Mammary epithelial cell (primary cell): ENCODE measurements at regions of chr10 and their contacts with region 1.

Region 1: GRCh38 chr10:90007226-90007625 is 305.8 kb downstream of the KIF20B start:
- DNase-seq: peak; percentile 98
- H3K4me3 ChIP-seq: no peak overlapping the region
- H3K27ac ChIP-seq: peak overlapping the region; percentile 92
- H3K4me1 ChIP-seq: peaks cover 18% of the 10 kb centered on the region
- H3K27me3 ChIP-seq: no peaks in the 10 kb centered on the region
- CTCF ChIP-seq: peak; percentile 62 to 89

Region 2: GRCh38 chr10:89837150-89837888 is 169.9 kb before region 1 on chr10:
- CTCF ChIA-PET with region 1: no interaction called
- dilution Hi-C with region 1: no loop called
- in situ Hi-C with region 1: no loop called
- intact Hi-C with region 1: no loop called
- DNase-seq: no peak
- H3K4me3 ChIP-seq: peak overlapping the region; percentile 17 to 34 (median 27)
- H3K27ac ChIP-seq: no peak overlapping the region
- H3K4me1 ChIP-seq: peaks cover 9% of the 10 kb centered on the region
- H3K27me3 ChIP-seq: no peaks in the 10 kb centered on the region
- CTCF ChIP-seq: no peak

Region 3: DNA sequence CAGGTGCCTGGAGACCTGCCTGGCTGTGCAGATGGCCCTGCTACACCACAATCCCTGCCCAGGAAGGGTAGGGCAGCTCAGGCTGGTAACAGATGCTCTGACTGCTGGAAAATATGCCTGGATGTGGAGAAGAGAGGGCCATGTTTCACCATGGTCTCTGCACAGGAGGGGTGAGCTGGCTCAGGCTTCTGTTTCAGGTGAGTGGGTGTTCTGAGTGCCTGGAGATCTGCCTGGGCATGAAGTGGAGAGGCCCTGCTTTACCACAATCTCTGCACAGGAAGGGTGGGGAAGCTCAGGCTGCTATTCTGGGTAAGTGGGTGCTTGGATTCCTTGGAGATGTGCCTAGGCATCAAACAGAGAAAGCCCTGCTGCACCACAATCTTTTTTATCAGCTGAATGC is 44.2 kb after region 1 on chr10:
- CTCF ChIA-PET with region 1: no interaction called
- dilution Hi-C with region 1: no loop called
- in situ Hi-C with region 1: no loop called
- intact Hi-C with region 1: loop called (anchors 1 kb)
- DNase-seq: peak; percentile 98
- H3K4me3 ChIP-seq: peak overlapping the region; percentile 48 to 62 (median 53)
- H3K27ac ChIP-seq: peak overlapping the region; percentile 92
- H3K4me1 ChIP-seq: peaks cover 34% of the 10 kb centered on the region
- H3K27me3 ChIP-seq: no peaks in the 10 kb centered on the region
- CTCF ChIP-seq: no peak

Region 4: DNA sequence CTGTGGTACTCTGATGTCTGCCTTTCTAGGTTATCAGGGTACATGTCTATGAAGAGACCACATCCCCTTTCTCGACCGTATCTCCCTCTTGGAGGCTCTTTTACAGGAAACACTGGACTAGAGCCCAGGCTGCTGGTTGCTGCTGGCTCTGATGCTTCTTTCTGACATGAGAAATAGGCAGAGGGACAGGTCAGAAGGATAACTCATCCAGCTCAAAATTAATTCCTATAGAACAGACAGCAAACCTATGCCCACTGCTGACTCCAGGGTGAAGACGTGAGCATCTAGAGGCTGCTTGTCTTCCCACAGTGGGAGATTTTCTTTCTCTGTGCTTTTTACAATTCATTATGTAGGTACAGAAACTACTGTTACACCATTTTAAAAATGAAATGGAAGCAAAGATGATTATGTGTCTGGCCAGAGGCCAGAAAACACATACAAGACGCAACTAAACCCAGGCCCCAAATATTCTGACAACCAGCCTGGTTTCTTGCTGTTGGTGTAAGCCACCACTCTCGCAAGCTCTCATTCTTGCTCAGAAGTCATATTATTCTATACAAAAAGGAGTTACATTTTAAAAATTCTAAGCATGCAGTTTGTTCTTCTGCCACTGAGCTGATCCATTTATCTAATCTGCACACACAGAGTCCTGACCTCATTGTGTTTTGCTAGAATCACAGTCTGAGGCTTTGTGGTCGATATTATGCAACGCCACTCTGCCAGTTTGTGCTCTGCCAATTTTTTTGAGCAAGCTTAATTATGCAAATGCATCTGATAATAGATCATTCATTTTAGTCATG is 118.4 kb after region 1 on chr10:
- CTCF ChIA-PET with region 1: no interaction called
- dilution Hi-C with region 1: no loop called
- in situ Hi-C with region 1: loop called in 1 of 2 experiments (anchors 25 kb)
- intact Hi-C with region 1: loop called (anchors 5 kb)
- DNase-seq: peak; percentile 77
- H3K4me3 ChIP-seq: no peak overlapping the region
- H3K27ac ChIP-seq: no peak overlapping the region
- H3K4me1 ChIP-seq: peaks cover 15% of the 10 kb centered on the region
- H3K27me3 ChIP-seq: no peaks in the 10 kb centered on the region
- CTCF ChIP-seq: peak; percentile 20 to 29

Region 5: DNA sequence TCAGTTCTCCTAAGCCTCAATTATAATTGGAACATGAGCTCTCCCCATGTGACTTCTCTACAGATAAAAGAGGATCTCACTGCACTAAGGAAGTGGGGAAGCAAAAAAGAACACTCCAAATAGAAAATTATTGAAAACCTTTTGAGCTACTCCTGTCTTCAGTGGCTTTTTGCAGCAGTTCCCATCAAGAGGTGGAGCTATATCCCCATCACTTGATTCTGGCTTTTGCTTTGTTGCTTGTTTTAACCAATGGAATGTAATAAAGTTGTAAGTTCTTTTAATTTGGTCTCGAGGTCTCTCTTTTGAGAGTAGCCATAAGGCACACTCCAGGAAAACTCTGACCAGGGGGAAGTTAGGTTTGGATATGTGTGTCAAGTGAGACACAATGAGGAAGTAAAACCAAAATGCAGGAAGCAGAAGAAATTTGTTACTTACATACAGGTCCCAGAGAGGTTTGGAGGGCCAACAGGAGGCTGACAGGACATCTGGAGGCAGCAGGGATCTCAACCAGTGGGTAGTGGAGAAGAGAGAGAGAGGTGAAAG is 281.2 kb after region 1 on chr10:
- CTCF ChIA-PET with region 1: no interaction called
- dilution Hi-C with region 1: no loop called
- in situ Hi-C with region 1: no loop called
- intact Hi-C with region 1: loop called (anchors 2 kb)
- DNase-seq: peak; percentile 29
- H3K4me3 ChIP-seq: no peak overlapping the region
- H3K27ac ChIP-seq: no peak overlapping the region
- H3K4me1 ChIP-seq: peaks cover 8% of the 10 kb centered on the region
- H3K27me3 ChIP-seq: no peaks in the 10 kb centered on the region
- CTCF ChIP-seq: peak; percentile 29 to 56

Region 6: DNA sequence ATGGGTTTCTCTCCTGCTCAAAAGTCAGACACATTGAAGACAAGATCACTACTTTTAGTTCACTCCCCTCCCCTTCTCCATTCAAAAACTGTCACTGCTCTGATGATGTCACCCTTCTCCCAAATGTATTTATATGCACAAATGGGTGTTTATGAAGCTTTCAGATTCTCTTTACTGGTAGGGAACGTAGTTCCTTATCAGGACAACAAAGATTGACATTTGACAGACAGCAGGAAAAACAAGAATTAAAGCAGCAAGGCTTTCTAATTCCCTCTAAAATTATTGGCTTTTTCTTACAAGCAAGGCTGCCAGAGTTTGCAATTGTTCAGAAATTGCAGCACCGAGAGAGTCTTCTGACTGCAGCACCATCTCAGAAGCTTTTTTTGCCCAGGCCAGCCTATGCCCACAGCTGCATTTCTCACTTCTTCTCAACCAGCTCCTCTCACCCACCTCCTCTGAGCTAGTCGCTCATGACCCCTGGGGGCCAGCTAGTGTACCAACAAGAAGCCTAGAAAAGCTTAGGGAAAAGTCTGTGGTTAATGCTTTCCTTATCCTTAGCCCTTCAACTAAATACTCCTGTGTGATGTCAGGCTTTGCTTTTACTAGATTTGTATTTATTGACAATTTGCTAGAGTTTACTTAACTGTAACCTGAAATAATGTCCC is 585.5 kb after region 1 on chr10:
- CTCF ChIA-PET with region 1: no interaction called
- dilution Hi-C with region 1: no loop called
- in situ Hi-C with region 1: no loop called
- intact Hi-C with region 1: loop called (anchors 1 kb)
- DNase-seq: peak; percentile 62
- H3K4me3 ChIP-seq: no peak overlapping the region
- H3K27ac ChIP-seq: no peak overlapping the region
- H3K4me1 ChIP-seq: peaks cover 4% of the 10 kb centered on the region
- H3K27me3 ChIP-seq: no peaks in the 10 kb centered on the region
- CTCF ChIP-seq: peak; percentile 63 to 79

Region 7: GRCh38 chr10:90862908-90863514 is 855.8 kb after region 1 on chr10:
- CTCF ChIA-PET with region 1: no interaction called
- dilution Hi-C with region 1: no loop called
- in situ Hi-C with region 1: no loop called
- intact Hi-C with region 1: loop called (anchors 5 kb)
- DNase-seq: peak; percentile 35
- H3K4me3 ChIP-seq: no peak overlapping the region
- H3K27ac ChIP-seq: no peak overlapping the region
- H3K4me1 ChIP-seq: peaks cover 16% of the 10 kb centered on the region
- H3K27me3 ChIP-seq: no peaks in the 10 kb centered on the region
- CTCF ChIP-seq: peak; percentile 81 to 93